Dorsolateral prefrontal cortex (tissue), 120 donors: ENCODE measurements at regions of chr3 and their contacts with region 1.

Region 1: DNA sequence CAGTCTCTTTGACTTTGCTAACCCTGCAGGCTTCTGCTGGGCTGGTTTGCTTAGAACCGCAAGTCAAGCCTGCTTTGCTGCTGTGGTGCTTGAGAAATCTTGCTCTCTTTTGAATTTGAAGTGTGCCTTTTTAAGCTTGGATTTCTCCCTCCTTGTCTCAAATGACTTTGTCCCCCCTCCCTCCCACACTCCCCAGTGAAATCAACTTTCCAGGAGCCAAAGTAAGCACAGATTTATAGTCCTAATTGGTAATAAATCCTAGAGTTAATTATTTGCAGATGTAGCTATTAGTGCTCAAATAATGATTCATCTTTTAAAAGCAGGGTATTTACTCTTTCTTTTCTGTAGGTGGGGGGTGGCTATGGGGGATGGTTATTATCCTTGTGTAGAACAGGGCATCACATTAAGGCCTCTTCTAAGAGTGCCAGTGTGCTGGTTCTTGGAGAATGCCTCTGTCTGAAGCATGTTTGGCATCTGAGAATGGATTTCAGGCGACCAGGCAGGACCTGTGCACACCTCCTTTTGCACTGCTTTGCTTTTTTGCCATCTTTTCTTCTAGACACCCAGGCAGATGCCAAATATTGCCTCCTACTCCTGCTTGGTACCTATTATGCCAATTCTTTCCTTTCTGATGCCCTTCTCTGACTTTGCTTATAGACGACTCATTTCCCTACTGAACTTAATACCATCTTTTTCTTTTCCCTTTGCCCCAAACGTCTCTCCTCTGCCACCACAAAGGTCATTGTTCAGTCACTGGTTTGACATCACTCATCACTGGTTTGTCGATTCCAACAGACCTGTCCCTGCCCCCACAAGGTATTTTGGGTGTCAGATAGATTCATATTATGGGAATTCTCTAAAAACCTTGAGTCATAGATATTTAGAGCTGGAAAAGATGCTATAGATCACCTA is 50.7 kb downstream of the CLDN11 start:
- DNase-seq: no peak
- H3K4me3 ChIP-seq: peak overlapping the region in 11 of 59 donors; percentile 0 to 70 (median 17)
- H3K27ac ChIP-seq: peak overlapping the region; percentile 79 to 99 (median 94)
- H3K27me3 ChIP-seq: no peaks in the 10 kb centered on the region
- CTCF ChIP-seq: no peak

Region 2: GRCh38 chr3:170419557-170420087 is 49.8 kb before region 1 on chr3:
- intact Hi-C with region 1: loop called (anchors 2 kb)
- DNase-seq: peak in 8 of 10 donors; percentile 31 to 78 (median 56)
- H3K4me3 ChIP-seq: peak overlapping the region; percentile 54 to 92 (median 72)
- H3K27ac ChIP-seq: peak overlapping the region; percentile 38 to 98 (median 92)
- H3K27me3 ChIP-seq: peaks cover 0 to 27% (median 3%) of the 10 kb centered on the region in 45 donors
- CTCF ChIP-seq: peak in 5 of 56 donors; percentile 8 to 37 (median 20)

Region 3: GRCh38 chr3:170425491-170426239 is 43.7 kb before region 1 on chr3:
- intact Hi-C with region 1: loop called (anchors 2 kb)
- DNase-seq: peak in 9 of 10 donors; percentile 57 to 89 (median 79)
- H3K4me3 ChIP-seq: peak overlapping the region in 55 of 59 donors; percentile 1 to 92 (median 67)
- H3K27ac ChIP-seq: peak overlapping the region; percentile 15 to 98 (median 92)
- H3K27me3 ChIP-seq: no peaks in the 10 kb centered on the region
- CTCF ChIP-seq: peak in 10 of 56 donors; percentile 10 to 33 (median 18)

Region 4: GRCh38 chr3:170889132-170889531 is 419.7 kb after region 1 on chr3:
- intact Hi-C with region 1: no loop called
- DNase-seq: no peak
- H3K4me3 ChIP-seq: no peak overlapping the region
- H3K27ac ChIP-seq: no peak overlapping the region
- H3K27me3 ChIP-seq: no peaks in the 10 kb centered on the region
- CTCF ChIP-seq: no peak